ENCODE measurements at regions of chr4 and their contacts with region 1.

Region 1: GRCh38 chr4:25234390-25235370 is 847 bp downstream of the PI4K2B start:
- DNase-seq: peak; percentile 67
- ATAC-seq: peak; percentile 52
- H3K4me3 ChIP-seq: peak overlapping the region; percentile 77 to 79
- H3K27ac ChIP-seq: peak overlapping the region; percentile 89
- H3K4me1 ChIP-seq: peaks cover 10 to 15% of the 10 kb centered on the region in 2 experiments
- H3K27me3 ChIP-seq: no peaks in the 10 kb centered on the region
- CTCF ChIP-seq: peak in 2 of 3 experiments; percentile 18 to 50; a peak in 2 of 6 replicates
- POLR2A ChIP-seq: no peak
- RAD21 ChIP-seq: no peak

Region 2: GRCh38 chr4:24105183-24106038 is 1129.3 kb before region 1 on chr4:
- CTCF ChIA-PET with region 1: no interaction called
- POLR2A ChIA-PET with region 1: no interaction called
- RAD21 ChIA-PET with region 1: no interaction called
- intact Hi-C with region 1: no loop called
- DNase-seq: no peak
- ATAC-seq: no peak
- H3K4me3 ChIP-seq: no peak overlapping the region
- H3K27ac ChIP-seq: no peak overlapping the region
- H3K4me1 ChIP-seq: no peaks in the 10 kb centered on the region
- H3K27me3 ChIP-seq: no peaks in the 10 kb centered on the region
- CTCF ChIP-seq: no peak
- POLR2A ChIP-seq: no peak
- RAD21 ChIP-seq: no peak

Region 3: GRCh38 chr4:25065475-25065874 is 169.2 kb before region 1 on chr4:
- CTCF ChIA-PET with region 1: no interaction called
- POLR2A ChIA-PET with region 1: no interaction called
- RAD21 ChIA-PET with region 1: no interaction called
- intact Hi-C with region 1: no loop called
- DNase-seq: no peak
- ATAC-seq: no peak
- H3K4me3 ChIP-seq: no peak overlapping the region
- H3K27ac ChIP-seq: no peak overlapping the region
- H3K4me1 ChIP-seq: no peaks in the 10 kb centered on the region
- H3K27me3 ChIP-seq: no peaks in the 10 kb centered on the region
- CTCF ChIP-seq: no peak
- POLR2A ChIP-seq: no peak
- RAD21 ChIP-seq: no peak

Region 4: DNA sequence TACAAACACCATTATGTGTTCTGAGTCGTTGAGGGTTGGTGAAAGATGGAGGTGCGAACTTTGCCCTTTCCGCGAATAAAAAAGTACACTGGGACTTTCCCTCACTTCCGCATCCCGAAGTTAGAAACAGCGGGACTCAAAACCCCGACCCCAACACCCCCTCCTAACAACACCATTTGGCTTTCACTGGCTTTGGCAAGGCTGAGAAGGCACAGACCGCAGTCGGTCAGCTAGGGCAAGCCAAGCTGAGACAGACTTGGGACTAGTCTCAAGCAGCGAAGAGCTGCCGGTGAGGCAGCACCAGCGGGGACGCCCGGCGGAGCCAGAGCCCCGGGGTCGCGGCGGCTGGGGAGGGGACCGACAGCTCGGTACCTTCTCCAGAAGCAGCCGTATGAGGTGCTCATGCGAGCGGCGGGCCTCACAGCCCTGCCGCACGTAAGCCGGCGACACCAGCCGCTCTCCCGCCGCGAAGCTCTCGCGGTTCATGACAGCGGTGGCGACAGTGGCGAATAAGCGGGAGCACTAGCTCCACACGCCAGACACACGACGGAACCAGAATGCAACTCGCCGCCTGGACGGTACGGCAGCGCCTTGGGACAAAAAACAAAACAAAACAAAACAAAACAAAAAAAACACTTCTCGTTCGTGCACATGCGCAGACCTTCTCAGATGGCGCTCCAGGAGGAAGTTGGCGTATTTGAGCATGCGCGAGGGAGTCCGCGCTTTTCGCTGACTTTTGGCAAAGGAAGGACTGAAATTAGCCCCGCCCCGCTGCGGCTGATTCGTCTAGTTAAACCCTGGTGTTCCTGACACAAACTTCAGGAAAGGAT is 74.6 kb before region 1 on chr4 and contains the start of gene SEPSECS:
- CTCF ChIA-PET with region 1: interaction called, 3 read pairs
- POLR2A ChIA-PET with region 1: no interaction called
- RAD21 ChIA-PET with region 1: no interaction called
- intact Hi-C with region 1: loop called (anchors 5 kb)
- DNase-seq: peak; percentile 96
- ATAC-seq: peak; percentile 91
- H3K4me3 ChIP-seq: peak within 1 kb of the TSS; percentile 76 to 93
- H3K27ac ChIP-seq: peak within 1 kb of the TSS; percentile 94
- H3K4me1 ChIP-seq: peaks cover 13 to 21% of the 10 kb centered on the region in 2 experiments
- H3K27me3 ChIP-seq: no peaks in the 10 kb centered on the region
- CTCF ChIP-seq: no peak
- POLR2A ChIP-seq: peak; percentile 90
- RAD21 ChIP-seq: no peak
- total RNA-seq, gene SEPSECS: 10.6 TPM

Region 5: GRCh38 chr4:25180524-25181131 is 54.1 kb before region 1 on chr4:
- CTCF ChIA-PET with region 1: no interaction called
- POLR2A ChIA-PET with region 1: no interaction called
- RAD21 ChIA-PET with region 1: no interaction called
- intact Hi-C with region 1: loop called (anchors 5 kb)
- DNase-seq: peak; percentile 32
- ATAC-seq: peak; percentile 92
- H3K4me3 ChIP-seq: no peak overlapping the region
- H3K27ac ChIP-seq: no peak overlapping the region
- H3K4me1 ChIP-seq: peaks cover 0 to 2% of the 10 kb centered on the region in 2 experiments; a peak in 1 of 4 replicates
- H3K27me3 ChIP-seq: no peaks in the 10 kb centered on the region
- CTCF ChIP-seq: peak; percentile 60 to 84 (median 76); a peak in 5 of 6 replicates
- POLR2A ChIP-seq: no peak
- RAD21 ChIP-seq: peak; percentile 60

Region 6: DNA sequence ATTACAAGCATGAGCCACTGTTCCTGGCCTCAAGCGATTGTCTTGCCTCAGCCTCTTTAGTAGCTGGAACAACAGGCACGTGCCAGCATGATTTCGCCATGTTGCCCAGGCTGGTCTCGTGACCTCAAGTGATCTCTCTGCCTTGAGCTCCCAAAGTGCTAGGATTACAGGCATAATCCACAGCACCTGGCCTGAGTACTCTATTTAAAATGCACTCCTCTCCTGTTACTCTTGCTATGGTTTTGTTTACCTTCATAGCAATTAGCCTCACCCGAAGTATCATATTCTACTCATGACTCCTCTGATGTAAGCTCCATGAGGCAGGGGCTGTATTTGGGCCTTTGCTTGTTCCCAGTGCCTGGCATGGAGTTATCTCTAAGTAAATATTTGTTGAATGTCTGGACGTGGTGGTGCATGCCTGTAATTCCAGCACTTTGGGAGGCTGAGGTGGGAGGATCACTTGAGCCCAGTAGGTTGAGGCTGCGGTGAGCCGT is 328.4 kb after region 1 on chr4:
- CTCF ChIA-PET with region 1: no interaction called
- POLR2A ChIA-PET with region 1: no interaction called
- RAD21 ChIA-PET with region 1: no interaction called
- intact Hi-C with region 1: no loop called
- DNase-seq: no peak
- ATAC-seq: no peak
- H3K4me3 ChIP-seq: no peak overlapping the region
- H3K27ac ChIP-seq: no peak overlapping the region
- H3K4me1 ChIP-seq: no peaks in the 10 kb centered on the region
- H3K27me3 ChIP-seq: no peaks in the 10 kb centered on the region
- CTCF ChIP-seq: no peak
- POLR2A ChIP-seq: no peak
- RAD21 ChIP-seq: no peak

Measured in HCT116 (cell line).